Gastrocnemius medialis (tissue), 4 donors: ENCODE measurements at regions of chr9 and their contacts with region 1.

Region 1: DNA sequence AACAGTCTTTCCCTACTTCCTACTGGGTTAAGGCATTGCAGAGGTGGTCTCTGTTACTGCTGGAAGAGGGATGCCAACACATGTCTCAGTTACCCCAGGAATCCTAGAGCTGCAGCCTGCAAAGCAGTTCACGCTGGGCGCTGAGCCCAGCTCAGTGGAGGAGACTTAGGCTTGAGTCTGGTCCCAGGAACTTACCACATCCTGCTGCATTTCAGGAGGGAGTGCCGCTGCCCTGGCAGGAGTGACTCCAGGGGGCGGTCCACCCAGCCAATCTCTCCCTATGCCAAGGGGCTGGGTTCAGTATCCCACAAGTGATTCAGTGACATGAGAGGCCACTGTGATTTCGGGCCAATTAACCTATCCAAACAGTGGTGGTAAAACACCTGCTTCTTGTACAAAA is 7.6 kb downstream of the TTC16 start:
- DNase-seq: no peak
- ATAC-seq: no peak
- H3K4me3 ChIP-seq: no peak overlapping the region
- H3K27ac ChIP-seq: no peak overlapping the region
- H3K4me1 ChIP-seq: no peaks in the 10 kb centered on the region
- H3K27me3 ChIP-seq: no peaks in the 10 kb centered on the region
- CTCF ChIP-seq: no peak
- POLR2A ChIP-seq: no peak

Region 2: GRCh38 chr9:127489471-127490115 is 233.9 kb before region 1 on chr9:
- in situ Hi-C with region 1: loop called in 1 of 4 experiments (anchors 10 kb)
- intact Hi-C with region 1: no loop called
- DNase-seq: no peak
- ATAC-seq: no peak
- H3K4me3 ChIP-seq: no peak overlapping the region
- H3K27ac ChIP-seq: no peak overlapping the region
- H3K4me1 ChIP-seq: no peaks in the 10 kb centered on the region
- H3K27me3 ChIP-seq: no peaks in the 10 kb centered on the region
- CTCF ChIP-seq: no peak
- POLR2A ChIP-seq: no peak